Mammary epithelial cell (primary cell): ENCODE measurements at regions of chr7 and their contacts with region 1.

Region 1: DNA sequence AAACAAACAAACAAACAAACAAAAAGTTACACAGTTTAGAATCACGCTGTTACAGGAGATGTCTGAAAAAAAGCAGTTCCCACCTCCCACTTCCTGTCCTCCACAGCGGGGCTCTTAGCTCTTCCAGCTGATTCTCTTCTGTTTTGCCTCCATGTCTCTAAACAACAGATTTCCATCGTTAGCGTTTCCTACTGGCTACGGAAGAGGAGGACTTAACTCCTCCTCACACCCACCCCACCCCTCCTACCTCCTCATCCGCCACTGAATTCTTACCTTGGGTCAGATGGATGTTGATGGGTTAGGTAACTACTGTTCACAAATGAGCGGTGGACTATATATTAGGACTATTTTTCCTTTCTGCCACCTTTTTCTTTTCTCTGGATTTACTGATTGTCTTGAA is 36.8 kb upstream of the NUB1 start:
- DNase-seq: no peak
- H3K4me3 ChIP-seq: no peak overlapping the region
- H3K27ac ChIP-seq: no peak overlapping the region
- H3K4me1 ChIP-seq: peaks cover 7% of the 10 kb centered on the region
- H3K27me3 ChIP-seq: no peaks in the 10 kb centered on the region
- CTCF ChIP-seq: no peak

Region 2: GRCh38 chr7:151123822-151124464 is 180.9 kb before region 1 on chr7:
- CTCF ChIA-PET with region 1: no interaction called
- dilution Hi-C with region 1: no loop called
- in situ Hi-C with region 1: no loop called
- intact Hi-C with region 1: loop called (anchors 1 kb)
- DNase-seq: peak; percentile 66
- H3K4me3 ChIP-seq: no peak overlapping the region
- H3K27ac ChIP-seq: no peak overlapping the region
- H3K4me1 ChIP-seq: no peaks in the 10 kb centered on the region
- H3K27me3 ChIP-seq: no peaks in the 10 kb centered on the region
- CTCF ChIP-seq: peak; percentile 99

Region 3: DNA sequence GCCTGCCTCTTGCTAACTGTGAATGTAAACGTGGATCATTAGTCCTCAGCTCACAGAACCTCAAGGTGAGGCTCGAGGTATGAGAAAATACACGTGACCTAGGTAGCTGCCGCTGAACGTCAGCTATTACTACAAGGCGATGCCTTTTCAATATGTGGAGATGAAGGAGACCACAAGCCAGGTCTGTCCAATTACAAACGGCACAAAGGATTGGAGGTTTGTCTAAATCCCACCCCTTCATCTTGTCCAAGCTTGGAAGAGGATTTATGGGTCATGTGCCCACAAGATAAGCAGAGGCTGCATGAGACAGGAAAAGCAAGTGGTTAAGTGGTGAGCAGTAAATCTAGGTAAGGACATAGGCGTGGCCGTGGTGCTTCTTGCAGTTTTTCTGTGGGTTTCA is 97.9 kb before region 1 on chr7:
- CTCF ChIA-PET with region 1: no interaction called
- dilution Hi-C with region 1: loop called (anchors 5 kb)
- in situ Hi-C with region 1: no loop called
- intact Hi-C with region 1: loop called (anchors 1 kb)
- DNase-seq: peak; percentile 9
- H3K4me3 ChIP-seq: no peak overlapping the region
- H3K27ac ChIP-seq: no peak overlapping the region
- H3K4me1 ChIP-seq: no peaks in the 10 kb centered on the region
- H3K27me3 ChIP-seq: no peaks in the 10 kb centered on the region
- CTCF ChIP-seq: no peak

Region 4: DNA sequence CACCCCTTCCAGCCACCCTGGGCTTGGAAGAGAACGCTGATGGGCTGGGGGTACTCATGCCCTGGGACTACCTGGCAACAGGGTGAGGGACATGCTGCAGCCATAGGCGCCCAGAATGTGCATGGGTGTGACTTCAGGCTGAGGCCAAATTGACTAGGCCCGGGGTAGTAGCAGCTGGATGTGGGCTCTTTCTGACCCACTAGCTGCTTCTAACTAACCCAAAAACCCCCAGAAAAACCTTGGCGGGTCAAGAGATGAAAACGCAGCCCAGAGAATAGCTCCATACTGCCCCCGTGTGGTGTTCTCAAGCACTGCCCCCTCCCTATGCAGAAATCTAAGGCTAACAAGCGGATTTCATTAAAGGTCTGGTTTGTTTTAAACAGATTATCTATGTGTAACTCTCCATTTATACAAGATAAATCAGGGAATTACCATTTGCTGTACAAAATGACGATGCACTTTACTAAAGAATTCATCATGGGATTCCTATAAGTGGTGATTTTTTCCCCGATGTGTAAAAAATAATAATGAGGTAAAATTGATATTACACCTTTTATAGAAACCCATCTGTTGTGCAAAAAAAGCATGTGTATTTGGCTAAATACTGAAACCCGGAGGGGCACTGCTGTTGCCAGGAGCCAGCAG is 60.5 kb before region 1 on chr7:
- CTCF ChIA-PET with region 1: no interaction called
- dilution Hi-C with region 1: no loop called
- in situ Hi-C with region 1: no loop called
- intact Hi-C with region 1: loop called (anchors 1 kb)
- DNase-seq: peak; percentile 19
- H3K4me3 ChIP-seq: no peak overlapping the region
- H3K27ac ChIP-seq: no peak overlapping the region
- H3K4me1 ChIP-seq: peaks cover 14% of the 10 kb centered on the region
- H3K27me3 ChIP-seq: peaks cover 2% of the 10 kb centered on the region
- CTCF ChIP-seq: peak; percentile 79 to 88

Region 5: GRCh38 chr7:151251328-151251972 is 53.4 kb before region 1 on chr7:
- CTCF ChIA-PET with region 1: no interaction called
- dilution Hi-C with region 1: loop called (anchors 5 kb)
- in situ Hi-C with region 1: no loop called
- intact Hi-C with region 1: no loop called
- DNase-seq: peak; percentile 33
- H3K4me3 ChIP-seq: peak overlapping the region in 2 of 3 experiments; percentile 42 to 50
- H3K27ac ChIP-seq: no peak overlapping the region
- H3K4me1 ChIP-seq: peaks cover 22% of the 10 kb centered on the region
- H3K27me3 ChIP-seq: peaks cover 2% of the 10 kb centered on the region
- CTCF ChIP-seq: no peak

Region 6: GRCh38 chr7:151368136-151368571 is 63.3 kb after region 1 on chr7:
- CTCF ChIA-PET with region 1: no interaction called
- dilution Hi-C with region 1: loop called (anchors 5 kb)
- in situ Hi-C with region 1: no loop called
- intact Hi-C with region 1: no loop called
- DNase-seq: peak; percentile 61
- H3K4me3 ChIP-seq: no peak overlapping the region
- H3K27ac ChIP-seq: no peak overlapping the region
- H3K4me1 ChIP-seq: peaks cover 3% of the 10 kb centered on the region
- H3K27me3 ChIP-seq: no peaks in the 10 kb centered on the region
- CTCF ChIP-seq: peak; percentile 91 to 97